ENCODE measurements at regions of chr22 and their contacts with region 1.

Region 1: GRCh38 chr22:49917974-49918910 is at the starts of genes ALG12 and CRELD2:
- DNase-seq: peak; percentile 97 to 99 (median 98)
- H3K4me3 ChIP-seq: peak within 1 kb of the TSS; percentile 45 to 87 (median 70)
- H3K27ac ChIP-seq: peak within 1 kb of the TSS; percentile 89 to 95 (median 94)
- H3K4me1 ChIP-seq: peaks cover 9 to 20% of the 10 kb centered on the region in 2 donors
- H3K27me3 ChIP-seq: no peaks in the 10 kb centered on the region
- CTCF ChIP-seq: peak in 1 of 6 experiments; percentile 2
- POLR2A ChIP-seq: peak; percentile 75 to 77
- total RNA-seq, gene ALG12: 9.8 to 33.6 (median 22.3) TPM
- total RNA-seq, gene CRELD2: 16.5 to 63.4 (median 45.4) TPM

Region 2: GRCh38 chr22:49789289-49790141 is 128.7 kb before region 1 on chr22:
- intact Hi-C with region 1: loop called (anchors 10 kb)
- DNase-seq: peak; percentile 28 to 77 (median 73)
- H3K4me3 ChIP-seq: no peak overlapping the region
- H3K27ac ChIP-seq: peak overlapping the region in 4 of 5 donors; percentile 68 to 86 (median 78)
- H3K4me1 ChIP-seq: peaks cover 24 to 57% of the 10 kb centered on the region in 2 donors
- H3K27me3 ChIP-seq: no peaks in the 10 kb centered on the region
- CTCF ChIP-seq: no peak
- POLR2A ChIP-seq: peak in 1 of 2 donors; percentile 25

Region 3: GRCh38 chr22:49852898-49853894 is 65.0 kb before region 1 on chr22 and contains the start of gene ZBED4:
- intact Hi-C with region 1: loop called (anchors 10 kb)
- DNase-seq: peak; percentile 96 to 98 (median 97)
- H3K4me3 ChIP-seq: peak within 1 kb of the TSS in 3 of 4 donors; percentile 22 to 82 (median 73)
- H3K27ac ChIP-seq: peak within 1 kb of the TSS; percentile 62 to 96 (median 84)
- H3K4me1 ChIP-seq: peaks cover 25 to 42% of the 10 kb centered on the region in 2 donors
- H3K27me3 ChIP-seq: peaks cover 20% of the 10 kb centered on the region
- CTCF ChIP-seq: no peak
- POLR2A ChIP-seq: peak; percentile 60 to 74
- total RNA-seq, gene ZBED4: 4.1 to 8.6 (median 6.1) TPM